Mammary epithelial cell (primary cell): ENCODE measurements at regions of chr2 and their contacts with region 1.

Region 1: GRCh38 chr2:218648088-218648786 is 11.2 kb downstream of the ZNF142 start:
- DNase-seq: peak; percentile 45
- H3K4me3 ChIP-seq: no peak overlapping the region
- H3K27ac ChIP-seq: no peak overlapping the region
- H3K4me1 ChIP-seq: peaks cover 2% of the 10 kb centered on the region
- H3K27me3 ChIP-seq: no peaks in the 10 kb centered on the region
- CTCF ChIP-seq: peak; percentile 82 to 99

Region 2: GRCh38 chr2:218269899-218270720 is 378.1 kb before region 1 on chr2 and contains the starts of genes AAMP and PNKD:
- CTCF ChIA-PET with region 1: no interaction called
- dilution Hi-C with region 1: no loop called
- in situ Hi-C with region 1: no loop called
- intact Hi-C with region 1: loop called (anchors 2 kb)
- DNase-seq: peak; percentile 100
- H3K4me3 ChIP-seq: peak within 1 kb of the TSS; percentile 72 to 91 (median 81)
- H3K27ac ChIP-seq: peak within 1 kb of the TSS; percentile 62
- H3K4me1 ChIP-seq: peaks cover 17% of the 10 kb centered on the region
- H3K27me3 ChIP-seq: no peaks in the 10 kb centered on the region
- CTCF ChIP-seq: peak in 1 of 2 donors; percentile 36
- total RNA-seq, gene AAMP: 80.2 to 87.6 TPM
- total RNA-seq, gene PNKD: 15.7 to 29.8 TPM

Region 3: GRCh38 chr2:218343591-218343990 is 304.6 kb before region 1 on chr2:
- CTCF ChIA-PET with region 1: no interaction called
- dilution Hi-C with region 1: no loop called
- in situ Hi-C with region 1: no loop called
- intact Hi-C with region 1: no loop called
- DNase-seq: no peak
- H3K4me3 ChIP-seq: no peak overlapping the region
- H3K27ac ChIP-seq: no peak overlapping the region
- H3K4me1 ChIP-seq: no peaks in the 10 kb centered on the region
- H3K27me3 ChIP-seq: no peaks in the 10 kb centered on the region
- CTCF ChIP-seq: no peak

Region 4: DNA sequence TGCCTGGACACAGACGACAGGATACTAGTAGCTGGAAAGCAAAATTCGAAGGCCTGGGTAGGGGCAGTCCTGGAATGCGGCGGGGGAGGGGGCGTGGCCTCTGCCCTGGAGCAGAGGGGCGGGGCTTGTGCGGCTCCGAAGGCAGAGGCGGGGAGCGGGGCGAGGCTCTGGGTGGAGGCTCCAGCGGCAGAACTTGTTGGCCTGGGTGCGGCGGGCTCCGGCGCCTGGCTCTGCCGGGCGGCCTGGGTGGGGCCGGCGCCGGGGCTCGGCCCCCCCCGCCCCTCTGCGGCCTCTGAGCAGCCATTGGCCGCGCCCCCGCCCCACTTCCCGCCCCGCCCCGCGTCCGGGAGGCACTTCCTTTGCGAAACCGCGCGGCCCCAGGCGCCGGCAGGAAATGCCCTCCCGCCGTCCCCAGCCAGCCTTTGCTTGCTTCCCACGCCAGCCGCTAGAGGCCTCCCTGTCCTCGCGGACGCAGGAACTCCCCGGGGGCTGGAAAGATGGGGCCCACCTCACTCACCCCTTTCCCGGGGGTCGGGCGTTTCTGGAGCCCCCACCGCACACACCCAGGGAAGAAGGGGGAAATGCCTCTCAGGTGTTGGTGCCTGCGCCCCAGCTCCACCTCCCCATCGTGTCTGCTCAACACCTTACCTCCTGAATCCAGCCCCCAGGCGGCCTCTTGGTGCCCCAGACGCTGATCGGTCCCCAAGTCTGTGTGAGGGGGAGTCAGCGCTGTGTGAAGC is 241.9 kb before region 1 on chr2:
- CTCF ChIA-PET with region 1: no interaction called
- dilution Hi-C with region 1: no loop called
- in situ Hi-C with region 1: no loop called
- intact Hi-C with region 1: loop called (anchors 1 kb)
- DNase-seq: peak; percentile 92
- H3K4me3 ChIP-seq: peak overlapping the region; percentile 29 to 45 (median 33)
- H3K27ac ChIP-seq: peak overlapping the region; percentile 58
- H3K4me1 ChIP-seq: peaks cover 30% of the 10 kb centered on the region
- H3K27me3 ChIP-seq: no peaks in the 10 kb centered on the region
- CTCF ChIP-seq: peak; percentile 45 to 87

Region 5: DNA sequence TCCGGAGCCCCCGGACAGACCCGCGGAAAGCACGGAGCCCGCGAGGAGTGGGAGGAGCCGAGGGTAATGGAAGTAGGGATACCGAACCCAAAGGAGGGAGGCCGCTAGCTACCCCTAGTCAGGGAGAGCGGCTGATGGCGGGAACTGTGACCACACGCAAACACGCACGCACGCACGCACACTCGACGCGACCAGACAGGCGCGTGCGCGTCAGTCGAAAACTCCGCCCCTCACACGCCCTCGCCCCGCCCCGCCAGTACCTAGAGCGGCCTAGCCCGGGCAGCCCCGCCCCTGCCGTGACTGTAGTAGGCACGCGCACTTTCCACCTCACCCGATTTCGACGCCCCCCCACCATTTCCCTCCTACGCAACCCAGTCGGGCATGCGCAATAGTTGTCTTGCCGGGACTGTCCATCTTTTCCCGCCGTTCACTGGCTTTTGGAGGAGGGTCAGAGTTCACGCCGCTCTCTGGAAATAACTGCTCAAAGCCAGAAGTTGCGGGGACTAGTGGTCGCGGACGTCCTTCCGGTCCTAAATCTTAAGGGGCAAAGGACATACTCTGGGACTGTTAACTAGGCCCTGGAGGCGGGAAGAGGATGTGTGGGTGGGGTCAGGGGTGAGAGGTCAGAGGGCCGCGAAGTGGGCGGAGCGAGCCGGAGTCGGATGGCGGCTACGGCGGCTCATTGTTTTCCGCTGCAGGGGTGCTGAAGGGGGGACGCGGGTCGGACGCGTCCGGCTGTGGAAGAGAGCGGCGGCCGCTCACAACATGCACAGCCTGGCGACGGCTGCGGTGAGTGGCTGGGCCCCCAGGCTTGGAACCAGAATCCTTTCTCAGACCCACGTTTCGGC is 79.8 kb before region 1 on chr2 and contains the starts of genes CNOT9 and USP37:
- CTCF ChIA-PET with region 1: no interaction called
- dilution Hi-C with region 1: no loop called
- in situ Hi-C with region 1: no loop called
- intact Hi-C with region 1: loop called (anchors 1 kb)
- DNase-seq: peak; percentile 98
- H3K4me3 ChIP-seq: peak within 1 kb of the TSS; percentile 62 to 98 (median 94)
- H3K27ac ChIP-seq: peak within 1 kb of the TSS; percentile 96
- H3K4me1 ChIP-seq: peaks cover 26% of the 10 kb centered on the region
- H3K27me3 ChIP-seq: no peaks in the 10 kb centered on the region
- CTCF ChIP-seq: no peak
- total RNA-seq, gene CNOT9: 39.8 to 53.3 TPM
- total RNA-seq, gene USP37: 10.7 to 14.6 TPM

Region 6: DNA sequence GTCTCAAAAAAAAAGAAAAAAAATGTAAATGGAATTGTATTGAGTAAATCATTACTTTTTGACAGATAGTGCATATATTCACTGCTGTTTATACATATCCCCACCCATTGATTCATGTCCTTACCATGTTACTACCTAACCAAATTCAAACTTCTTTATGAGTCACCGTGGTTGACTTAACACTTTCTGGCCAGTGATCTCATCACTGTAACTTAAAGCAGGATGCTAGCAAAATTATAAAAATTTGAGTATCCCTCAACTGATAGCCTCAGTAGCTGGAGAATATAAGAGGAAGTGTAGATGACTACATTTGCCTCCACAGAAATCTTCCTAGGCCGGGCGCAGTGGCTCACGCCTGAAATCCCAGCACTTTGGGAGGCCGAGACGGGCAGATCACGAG is 66.2 kb before region 1 on chr2:
- CTCF ChIA-PET with region 1: no interaction called
- dilution Hi-C with region 1: no loop called
- in situ Hi-C with region 1: no loop called
- intact Hi-C with region 1: loop called (anchors 5 kb)
- DNase-seq: peak; percentile 71
- H3K4me3 ChIP-seq: no peak overlapping the region
- H3K27ac ChIP-seq: no peak overlapping the region
- H3K4me1 ChIP-seq: peaks cover 9% of the 10 kb centered on the region
- H3K27me3 ChIP-seq: no peaks in the 10 kb centered on the region
- CTCF ChIP-seq: no peak

Region 7: DNA sequence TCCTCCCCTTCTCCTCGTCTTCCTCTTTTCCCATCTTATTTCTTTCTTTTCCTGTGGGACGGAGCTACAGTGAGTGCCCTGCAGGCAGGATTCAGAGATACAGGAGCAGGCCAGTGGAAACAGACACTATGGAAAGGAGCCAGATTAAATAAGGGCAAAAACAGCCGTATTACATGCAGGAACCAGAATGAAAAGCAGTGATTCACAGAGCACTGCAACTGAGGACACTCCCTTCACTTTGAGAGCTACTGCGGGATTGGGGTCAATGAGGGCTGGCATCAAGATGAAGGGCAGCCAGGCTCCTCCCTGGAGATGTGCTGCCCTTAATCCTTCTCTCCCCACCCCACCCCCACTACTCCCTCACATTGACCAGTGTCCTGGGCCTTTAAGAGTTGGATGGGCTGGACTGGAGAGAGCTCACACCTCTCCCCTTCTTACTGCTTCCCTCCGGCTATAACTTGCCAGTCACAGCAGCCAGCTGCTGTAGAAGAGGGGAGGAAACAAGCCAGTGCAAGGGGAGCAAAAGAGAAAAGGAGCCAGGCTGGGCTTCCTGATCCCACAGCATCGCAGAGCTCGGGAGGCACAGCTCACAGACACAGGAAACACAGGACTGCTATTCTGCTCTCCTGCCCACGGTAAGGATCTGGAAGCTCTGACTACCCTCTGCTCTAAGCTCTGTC is 40.7 kb before region 1 on chr2 and contains the start of gene PLCD4:
- CTCF ChIA-PET with region 1: no interaction called
- dilution Hi-C with region 1: loop called (anchors 5 kb)
- in situ Hi-C with region 1: no loop called
- intact Hi-C with region 1: no loop called
- DNase-seq: peak; percentile 94
- H3K4me3 ChIP-seq: peak within 1 kb of the TSS; percentile 0 to 37 (median 33)
- H3K27ac ChIP-seq: peak within 1 kb of the TSS; percentile 47
- H3K4me1 ChIP-seq: peaks cover 18% of the 10 kb centered on the region
- H3K27me3 ChIP-seq: no peaks in the 10 kb centered on the region
- CTCF ChIP-seq: peak in 1 of 2 donors; percentile 16
- total RNA-seq, gene PLCD4: 1.8 to 5.4 TPM

Region 8: DNA sequence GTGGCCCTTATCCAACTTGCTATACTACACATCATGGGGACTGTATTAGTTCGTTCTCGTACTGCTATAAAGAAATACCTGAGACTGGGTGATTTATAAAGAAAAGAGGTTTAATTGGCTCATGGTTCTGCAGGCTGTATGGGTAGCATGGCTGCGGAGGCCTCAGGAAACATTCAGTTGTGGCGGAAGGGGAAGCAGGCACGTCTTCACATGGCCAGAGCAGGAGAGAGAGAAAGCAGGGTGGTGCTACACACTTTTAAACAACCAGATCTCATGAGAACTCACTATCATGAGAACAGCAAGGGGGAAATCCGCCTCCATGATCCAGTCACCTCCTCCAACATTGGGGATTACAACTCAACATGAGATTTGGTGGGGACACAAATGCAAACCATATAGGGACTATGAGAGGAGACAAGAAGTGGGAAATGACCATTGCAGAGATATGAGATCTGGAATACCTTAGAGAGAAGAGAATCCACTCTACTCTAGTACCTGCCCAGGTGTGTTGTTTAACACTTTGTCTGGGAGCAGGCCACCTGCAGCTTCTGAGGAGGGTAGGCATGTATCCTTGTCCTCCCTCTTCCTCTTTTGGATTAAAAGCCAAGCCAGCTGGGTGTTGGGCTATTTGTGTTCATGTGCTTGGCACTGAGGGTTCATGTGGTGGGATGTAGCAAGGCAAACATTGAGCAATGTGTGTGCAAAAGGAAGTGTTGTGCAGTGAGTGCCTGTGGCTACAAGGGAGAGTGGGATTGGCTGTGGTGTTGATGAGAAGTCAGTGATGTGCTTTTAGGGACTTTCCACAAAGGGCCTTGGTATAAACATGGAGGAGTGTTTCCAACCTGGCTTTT is 85.2 kb after region 1 on chr2:
- CTCF ChIA-PET with region 1: no interaction called
- dilution Hi-C with region 1: no loop called
- in situ Hi-C with region 1: no loop called
- intact Hi-C with region 1: no loop called
- DNase-seq: peak; percentile 91
- H3K4me3 ChIP-seq: no peak overlapping the region
- H3K27ac ChIP-seq: peak overlapping the region; percentile 86
- H3K4me1 ChIP-seq: peaks cover 52% of the 10 kb centered on the region
- H3K27me3 ChIP-seq: no peaks in the 10 kb centered on the region
- CTCF ChIP-seq: no peak

Region 9: GRCh38 chr2:218814540-218815243 is 166.5 kb after region 1 on chr2:
- CTCF ChIA-PET with region 1: no interaction called
- dilution Hi-C with region 1: no loop called
- in situ Hi-C with region 1: no loop called
- intact Hi-C with region 1: no loop called
- DNase-seq: no peak
- H3K4me3 ChIP-seq: no peak overlapping the region
- H3K27ac ChIP-seq: no peak overlapping the region
- H3K4me1 ChIP-seq: no peaks in the 10 kb centered on the region
- H3K27me3 ChIP-seq: peaks cover 3% of the 10 kb centered on the region
- CTCF ChIP-seq: no peak